Mammary epithelial cell (primary cell): ENCODE measurements at regions of chr4 and their contacts with region 1.

Region 1: GRCh38 chr4:337143-337931 is at the start of gene ZNF141:
- DNase-seq: peak; percentile 96
- H3K4me3 ChIP-seq: peak within 1 kb of the TSS; percentile 73 to 80 (median 78)
- H3K27ac ChIP-seq: peak within 1 kb of the TSS; percentile 79
- H3K4me1 ChIP-seq: peaks cover 12% of the 10 kb centered on the region
- H3K27me3 ChIP-seq: no peaks in the 10 kb centered on the region
- CTCF ChIP-seq: no peak
- total RNA-seq, gene ZNF141: 8.0 to 10.2 TPM

Region 2: DNA sequence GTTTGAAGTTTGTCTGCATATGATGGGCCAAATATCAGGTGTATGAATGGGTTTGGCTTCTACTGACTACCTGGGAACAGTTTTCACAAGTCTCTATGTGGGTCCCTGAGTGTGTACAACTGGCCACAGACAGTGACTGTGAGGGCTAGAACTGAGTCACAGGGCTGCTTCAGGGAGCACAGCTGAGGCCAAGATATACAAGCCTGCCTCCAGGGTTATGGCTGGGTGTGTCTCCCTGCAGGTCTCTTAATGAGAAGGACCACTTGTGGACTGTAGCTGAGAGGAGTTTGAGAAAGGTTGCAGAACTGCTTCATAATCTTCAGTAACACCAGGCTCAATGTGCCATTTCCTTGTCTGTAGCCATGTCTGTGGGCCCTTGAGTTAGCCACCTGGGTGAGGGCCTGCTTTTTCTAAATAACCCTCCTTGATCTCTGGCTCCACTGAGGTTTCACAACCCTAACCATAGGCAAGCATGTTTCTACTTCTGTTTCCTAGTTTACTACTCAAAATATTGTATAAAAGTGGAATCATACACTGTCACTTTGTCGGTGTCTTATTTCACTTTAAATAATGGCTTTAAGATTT is 113.3 kb before region 1 on chr4:
- CTCF ChIA-PET with region 1: no interaction called
- dilution Hi-C with region 1: no loop called
- in situ Hi-C with region 1: no loop called
- intact Hi-C with region 1: no loop called
- DNase-seq: no peak
- H3K4me3 ChIP-seq: no peak overlapping the region
- H3K27ac ChIP-seq: no peak overlapping the region
- H3K4me1 ChIP-seq: no peaks in the 10 kb centered on the region
- H3K27me3 ChIP-seq: no peaks in the 10 kb centered on the region
- CTCF ChIP-seq: no peak

Region 3: DNA sequence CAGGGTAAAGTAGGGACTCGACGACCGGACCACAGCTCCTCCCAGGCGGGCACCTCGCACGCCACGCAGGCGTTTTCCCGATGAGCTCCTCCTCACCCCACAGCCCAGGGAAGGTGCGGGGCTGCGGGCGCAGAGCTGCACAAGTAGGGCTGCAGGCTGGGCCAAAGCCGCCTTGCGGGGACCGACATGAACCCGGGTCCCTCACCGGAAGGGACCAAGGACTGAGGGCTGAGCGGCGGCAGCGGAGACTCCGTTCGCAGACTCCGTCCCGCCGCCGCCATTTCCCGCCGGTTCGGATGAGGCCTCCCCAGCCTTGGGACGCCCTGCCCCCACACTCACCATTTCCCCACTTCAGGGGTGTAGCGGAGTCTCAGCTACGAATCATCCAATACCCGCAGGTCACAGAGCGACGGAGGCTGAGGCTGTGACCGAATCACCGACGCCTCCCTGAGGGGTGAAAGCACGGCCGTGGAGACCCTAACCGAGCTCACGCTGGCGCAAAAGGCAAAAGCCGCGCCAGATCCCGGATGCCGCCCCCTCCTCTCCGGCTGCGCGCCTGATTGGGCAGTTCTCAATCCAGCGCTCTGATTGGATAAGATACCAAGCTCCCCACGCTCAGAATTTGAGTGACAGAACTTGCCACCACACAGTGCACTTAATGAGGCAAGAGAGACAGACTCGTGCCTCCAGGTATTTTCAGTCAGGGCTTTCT is 32.2 kb before region 1 on chr4 and contains the start of gene ZNF732:
- CTCF ChIA-PET with region 1: no interaction called
- dilution Hi-C with region 1: no loop called
- in situ Hi-C with region 1: no loop called
- intact Hi-C with region 1: loop called (anchors 2 kb)
- DNase-seq: peak; percentile 89
- H3K4me3 ChIP-seq: peak within 1 kb of the TSS; percentile 65 to 76 (median 74)
- H3K27ac ChIP-seq: peak within 1 kb of the TSS; percentile 34
- H3K4me1 ChIP-seq: peaks cover 3% of the 10 kb centered on the region
- H3K27me3 ChIP-seq: no peaks in the 10 kb centered on the region
- CTCF ChIP-seq: no peak
- total RNA-seq, gene ZNF732: 2.0 to 2.7 TPM

Region 4: DNA sequence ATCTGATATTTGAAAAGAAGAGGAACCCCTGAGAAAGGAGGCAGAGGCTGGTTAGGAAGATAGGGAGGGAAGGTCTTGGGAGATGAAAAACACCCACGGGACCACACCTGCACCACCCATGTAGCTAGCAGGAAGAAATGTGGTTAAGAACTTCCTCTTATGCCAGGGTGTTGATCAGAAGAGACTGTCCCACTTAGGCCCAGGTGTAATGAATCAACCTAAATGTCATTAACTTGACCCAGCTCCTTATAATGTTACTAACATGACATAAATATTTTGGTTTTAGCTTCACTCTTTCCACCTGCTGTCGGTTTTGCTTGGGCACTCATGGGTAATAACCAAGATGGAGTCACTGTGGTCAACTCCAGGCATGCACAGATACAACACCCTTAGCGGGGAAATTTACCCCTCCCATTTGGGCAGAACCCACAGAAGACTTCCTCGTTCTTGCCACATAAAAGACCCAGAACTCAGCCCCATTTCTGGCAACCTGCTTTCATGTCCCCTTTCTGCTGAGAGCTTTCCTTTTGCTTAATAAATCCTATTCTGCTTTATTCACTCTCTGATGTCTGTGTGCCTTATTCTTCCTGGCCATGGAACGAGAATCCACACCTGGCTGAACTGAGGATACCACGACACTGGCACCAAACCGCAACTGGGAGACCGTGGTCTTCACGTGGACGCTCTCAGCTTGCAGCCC is 47.1 kb after region 1 on chr4:
- CTCF ChIA-PET with region 1: no interaction called
- dilution Hi-C with region 1: loop called (anchors 5 kb)
- in situ Hi-C with region 1: no loop called
- intact Hi-C with region 1: no loop called
- DNase-seq: no peak
- H3K4me3 ChIP-seq: no peak overlapping the region
- H3K27ac ChIP-seq: no peak overlapping the region
- H3K4me1 ChIP-seq: no peaks in the 10 kb centered on the region
- H3K27me3 ChIP-seq: no peaks in the 10 kb centered on the region
- CTCF ChIP-seq: no peak

Region 5: GRCh38 chr4:422587-422986 is 85.2 kb after region 1 on chr4:
- CTCF ChIA-PET with region 1: no interaction called
- dilution Hi-C with region 1: no loop called
- in situ Hi-C with region 1: no loop called
- intact Hi-C with region 1: no loop called
- DNase-seq: no peak
- H3K4me3 ChIP-seq: no peak overlapping the region
- H3K27ac ChIP-seq: no peak overlapping the region
- H3K4me1 ChIP-seq: no peaks in the 10 kb centered on the region
- H3K27me3 ChIP-seq: no peaks in the 10 kb centered on the region
- CTCF ChIP-seq: no peak

Region 6: GRCh38 chr4:473570-474457 is 136.5 kb after region 1 on chr4:
- CTCF ChIA-PET with region 1: no interaction called
- dilution Hi-C with region 1: no loop called
- in situ Hi-C with region 1: no loop called
- intact Hi-C with region 1: loop called (anchors 10 kb)
- DNase-seq: peak; percentile 99
- H3K4me3 ChIP-seq: peak overlapping the region; percentile 73 to 77 (median 77)
- H3K27ac ChIP-seq: peak overlapping the region; percentile 85
- H3K4me1 ChIP-seq: peaks cover 14% of the 10 kb centered on the region
- H3K27me3 ChIP-seq: no peaks in the 10 kb centered on the region
- CTCF ChIP-seq: no peak

Region 7: DNA sequence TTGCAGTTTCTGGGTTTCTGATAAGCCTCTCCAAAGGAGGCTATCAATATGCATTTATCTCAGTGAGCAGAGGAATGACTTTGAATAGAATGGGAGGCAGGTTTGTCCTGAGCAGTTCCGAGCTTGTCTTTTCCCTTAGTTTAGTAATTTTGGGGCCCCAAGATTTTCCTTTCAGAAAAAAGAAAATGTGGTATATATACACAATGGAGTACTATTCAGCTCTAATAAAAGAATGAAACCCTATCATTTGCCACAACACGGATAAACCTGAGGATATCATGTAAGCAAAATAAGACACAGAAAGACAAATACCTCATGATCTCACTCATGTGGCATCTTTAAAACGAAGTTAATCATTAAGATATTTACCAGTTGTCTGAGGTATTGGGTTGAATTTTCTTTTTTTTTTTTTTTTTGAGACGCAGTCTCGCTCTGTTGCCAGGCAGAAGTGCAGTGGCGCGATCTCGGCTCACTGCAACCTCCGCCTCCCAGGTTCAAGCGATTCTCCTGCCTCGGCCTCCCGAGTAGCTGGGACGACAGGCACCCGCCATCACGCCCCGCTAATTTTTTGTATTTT is 161.1 kb after region 1 on chr4:
- CTCF ChIA-PET with region 1: no interaction called
- dilution Hi-C with region 1: no loop called
- in situ Hi-C with region 1: no loop called
- intact Hi-C with region 1: loop called (anchors 2 kb)
- DNase-seq: no peak
- H3K4me3 ChIP-seq: peak overlapping the region; percentile 95 to 98 (median 95)
- H3K27ac ChIP-seq: peak overlapping the region; percentile 81
- H3K4me1 ChIP-seq: peaks cover 15% of the 10 kb centered on the region
- H3K27me3 ChIP-seq: no peaks in the 10 kb centered on the region
- CTCF ChIP-seq: no peak

Region 8: GRCh38 chr4:663438-664428 is 326.4 kb after region 1 on chr4:
- CTCF ChIA-PET with region 1: no interaction called
- dilution Hi-C with region 1: no loop called
- in situ Hi-C with region 1: no loop called
- intact Hi-C with region 1: no loop called
- DNase-seq: no peak
- H3K4me3 ChIP-seq: no peak overlapping the region
- H3K27ac ChIP-seq: no peak overlapping the region
- H3K4me1 ChIP-seq: peaks cover 4% of the 10 kb centered on the region
- H3K27me3 ChIP-seq: peaks cover 7% of the 10 kb centered on the region
- CTCF ChIP-seq: no peak